Heart right ventricle (tissue), 16 donors: ENCODE measurements at regions of chr15 and their contacts with region 1.

Region 1: DNA sequence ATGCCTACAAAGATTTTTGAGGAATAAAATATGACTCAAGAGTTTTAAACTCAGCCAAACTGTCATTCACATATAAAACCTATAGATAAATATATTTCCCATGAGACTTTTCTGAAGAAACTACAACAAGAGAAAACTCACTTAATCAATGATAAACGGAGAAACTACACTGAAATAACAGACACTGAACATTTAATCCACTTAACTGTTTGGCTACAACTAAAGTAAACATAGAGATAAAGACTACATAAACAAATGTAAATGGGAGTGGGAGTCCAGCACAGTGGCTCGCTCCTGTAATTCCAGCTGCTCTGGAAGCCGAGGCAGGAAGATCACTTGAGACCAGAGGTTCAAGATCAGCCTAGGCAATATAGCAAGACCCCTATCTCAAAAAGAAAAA is 79.2 kb downstream of the MEX3B start:
- DNase-seq: no peak
- ATAC-seq: no peak
- H3K4me3 ChIP-seq: no peak overlapping the region
- H3K27ac ChIP-seq: no peak overlapping the region
- H3K4me1 ChIP-seq: no peaks in the 10 kb centered on the region
- H3K27me3 ChIP-seq: no peaks in the 10 kb centered on the region
- CTCF ChIP-seq: no peak

Region 2: DNA sequence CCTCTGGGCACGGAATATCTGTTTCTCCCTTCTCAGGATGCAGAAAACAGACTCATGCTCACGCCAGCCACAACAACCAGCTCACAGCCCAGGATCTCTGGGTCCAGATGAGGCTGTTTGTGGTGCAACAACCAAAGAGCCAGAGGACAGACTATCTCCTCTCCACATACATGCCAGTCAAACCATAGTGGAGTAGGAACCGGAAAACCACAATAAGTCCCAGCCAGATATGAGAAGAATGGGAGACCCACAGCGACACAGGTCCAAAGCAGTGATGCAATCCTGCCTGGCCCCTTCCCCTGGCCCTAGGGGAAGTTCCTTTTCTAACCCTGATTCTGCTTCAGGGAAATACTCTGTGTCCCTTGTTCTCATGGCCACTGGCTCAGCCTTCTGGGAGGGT is 51.6 kb after region 1 on chr15:
- intact Hi-C with region 1: loop called in 1 of 10 experiments (anchors 10 kb)
- DNase-seq: no peak
- ATAC-seq: no peak
- H3K4me3 ChIP-seq: no peak overlapping the region
- H3K27ac ChIP-seq: no peak overlapping the region
- H3K4me1 ChIP-seq: peaks cover 0 to 7% (median 0%) of the 10 kb centered on the region in 9 donors
- H3K27me3 ChIP-seq: peaks cover 0 to 11% (median 0%) of the 10 kb centered on the region in 7 donors
- CTCF ChIP-seq: no peak